Esophagus muscularis mucosa (tissue), 4 donors: ENCODE measurements at regions of chr11 and their contacts with region 1.

Region 1: GRCh38 chr11:45110562-45110961 is 35.9 kb upstream of the PRDM11 start:
- DNase-seq: peak; percentile 89
- H3K4me3 ChIP-seq: no peak overlapping the region
- H3K27ac ChIP-seq: no peak overlapping the region
- H3K4me1 ChIP-seq: peaks cover 0 to 7% (median 0%) of the 10 kb centered on the region in 4 donors
- H3K27me3 ChIP-seq: peaks cover 0 to 35% (median 0%) of the 10 kb centered on the region in 4 donors
- CTCF ChIP-seq: peak; percentile 80 to 89 (median 80)
- EP300 ChIP-seq: no peak
- POLR2A ChIP-seq: no peak

Region 2: DNA sequence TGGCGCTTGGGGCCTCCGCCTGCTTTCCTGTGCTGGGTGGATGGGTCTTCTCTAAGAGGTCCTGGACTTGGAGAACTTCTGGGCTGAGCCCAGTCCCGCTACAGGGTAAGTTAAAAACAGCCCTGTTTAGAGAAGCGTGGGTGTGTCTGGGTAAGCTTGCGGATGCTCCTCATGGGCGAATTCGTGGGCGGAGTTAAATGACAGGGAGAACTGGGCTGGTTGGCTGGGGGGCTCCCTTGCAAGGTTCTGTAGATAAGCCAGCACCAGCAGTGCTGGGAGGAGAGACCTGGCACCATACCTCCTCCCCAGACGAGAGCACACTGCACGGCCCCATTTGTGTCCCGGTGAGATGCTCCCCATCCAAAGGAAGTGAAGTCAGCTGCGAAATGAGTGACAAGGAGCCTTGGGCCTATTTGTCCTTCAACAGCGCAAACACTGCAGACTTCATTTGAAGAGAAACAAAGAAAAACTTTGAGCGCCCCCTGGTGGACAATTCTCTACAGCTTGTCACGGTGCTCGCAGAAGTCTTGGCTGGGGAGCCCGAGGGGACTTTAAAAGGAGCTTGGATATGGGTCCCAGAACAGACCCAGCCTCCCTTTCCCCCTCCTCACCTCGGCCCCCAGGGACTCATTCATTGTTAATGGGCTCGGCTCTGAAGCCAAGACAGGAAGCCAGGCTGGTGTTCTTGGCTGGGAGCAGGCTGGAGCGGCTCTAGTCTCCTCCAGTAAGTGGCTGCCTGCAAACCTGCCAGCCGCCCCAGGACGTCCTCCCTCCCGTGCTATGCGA is 199.3 kb before region 1 on chr11:
- intact Hi-C with region 1: no loop called
- DNase-seq: peak; percentile 98
- H3K4me3 ChIP-seq: no peak overlapping the region
- H3K27ac ChIP-seq: peak overlapping the region; percentile 13 to 45 (median 38)
- H3K4me1 ChIP-seq: peaks cover 17 to 38% (median 30%) of the 10 kb centered on the region in 4 donors
- H3K27me3 ChIP-seq: no peaks in the 10 kb centered on the region
- CTCF ChIP-seq: peak; percentile 81 to 87 (median 85)
- EP300 ChIP-seq: no peak
- POLR2A ChIP-seq: no peak

Region 3: GRCh38 chr11:45073685-45074141 is 36.8 kb before region 1 on chr11:
- intact Hi-C with region 1: no loop called
- DNase-seq: no peak
- H3K4me3 ChIP-seq: no peak overlapping the region
- H3K27ac ChIP-seq: no peak overlapping the region
- H3K4me1 ChIP-seq: peaks cover 5 to 15% (median 7%) of the 10 kb centered on the region in 4 donors
- H3K27me3 ChIP-seq: no peaks in the 10 kb centered on the region
- CTCF ChIP-seq: no peak
- EP300 ChIP-seq: no peak
- POLR2A ChIP-seq: no peak

Region 4: GRCh38 chr11:45233121-45233803 is 122.7 kb after region 1 on chr11:
- intact Hi-C with region 1: loop called (anchors 5 kb)
- DNase-seq: no peak
- H3K4me3 ChIP-seq: no peak overlapping the region
- H3K27ac ChIP-seq: no peak overlapping the region
- H3K4me1 ChIP-seq: peaks cover 0 to 6% (median 3%) of the 10 kb centered on the region in 4 donors
- H3K27me3 ChIP-seq: peaks cover 0 to 16% (median 0%) of the 10 kb centered on the region in 4 donors
- CTCF ChIP-seq: peak; percentile 71 to 92 (median 74)
- EP300 ChIP-seq: no peak
- POLR2A ChIP-seq: no peak

Region 5: DNA sequence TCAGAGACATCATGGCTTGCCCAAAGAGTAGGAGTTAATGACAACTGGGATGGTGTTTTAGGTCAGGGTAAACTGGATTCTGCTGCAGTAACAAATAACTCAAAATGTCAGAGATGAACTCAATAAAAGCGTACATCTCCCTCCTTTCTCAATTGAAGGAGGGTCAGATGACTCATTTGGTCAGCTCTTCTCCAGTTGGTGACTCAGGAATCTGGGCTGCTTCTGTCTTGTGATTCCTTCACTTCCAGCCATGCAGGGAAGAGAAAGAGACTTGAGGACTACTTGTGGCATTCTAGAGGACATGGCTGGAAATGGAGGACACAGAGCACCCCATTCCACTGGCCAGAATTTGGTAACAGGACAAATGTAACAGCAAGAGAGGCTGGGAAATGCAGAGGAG is 178.8 kb after region 1 on chr11:
- intact Hi-C with region 1: loop called (anchors 1 kb)
- DNase-seq: no peak
- H3K4me3 ChIP-seq: no peak overlapping the region
- H3K27ac ChIP-seq: no peak overlapping the region
- H3K4me1 ChIP-seq: peaks cover 8 to 11% (median 8%) of the 10 kb centered on the region in 4 donors
- H3K27me3 ChIP-seq: peaks cover 0 to 71% (median 29%) of the 10 kb centered on the region in 4 donors
- CTCF ChIP-seq: no peak
- EP300 ChIP-seq: no peak
- POLR2A ChIP-seq: no peak